B cell (primary cell): ENCODE measurements at regions of chr6 and their contacts with region 1.

Region 1: GRCh38 chr6:24581084-24581669 is 64.8 kb downstream of the KIAA0319 start:
- DNase-seq: peak; percentile 81
- ATAC-seq: peak; percentile 87
- H3K4me3 ChIP-seq: no peak overlapping the region
- H3K4me3 Mint-ChIP-seq: no peak overlapping the region
- H3K27ac ChIP-seq: no peak overlapping the region
- H3K27ac Mint-ChIP-seq: no peak overlapping the region
- H3K4me1 ChIP-seq: peaks cover 3 to 5% of the 10 kb centered on the region in 2 donors
- H3K4me1 Mint-ChIP-seq: peaks cover 4% of the 10 kb centered on the region
- H3K27me3 ChIP-seq: no peaks in the 10 kb centered on the region
- H3K27me3 Mint-ChIP-seq: no peaks in the 10 kb centered on the region
- CTCF ChIP-seq: peak; percentile 86

Region 2: DNA sequence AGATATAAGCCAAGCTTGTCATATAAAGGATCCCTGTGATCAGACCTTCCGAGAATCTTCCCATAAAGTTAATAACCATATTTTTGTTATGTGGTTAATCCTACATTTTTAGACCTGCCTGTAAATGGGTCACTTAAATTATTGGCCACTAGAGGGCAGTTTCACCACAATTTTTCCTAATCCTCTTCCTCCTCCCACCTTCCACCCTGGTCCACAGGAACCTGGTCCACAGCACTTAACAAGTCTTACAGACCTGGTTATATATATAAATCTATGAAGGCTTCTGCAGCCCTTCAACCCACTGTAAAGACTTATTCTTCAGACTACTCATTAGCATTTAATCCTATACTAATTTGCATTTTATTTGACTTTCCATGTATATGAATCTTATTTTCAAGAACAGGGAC is 150.1 kb before region 1 on chr6:
- CTCF ChIA-PET with region 1: interaction called, 8 read pairs
- POLR2A ChIA-PET with region 1: no interaction called
- intact Hi-C with region 1: loop called (anchors 2 kb)
- DNase-seq: peak; percentile 65
- ATAC-seq: peak; percentile 58
- H3K4me3 ChIP-seq: no peak overlapping the region
- H3K4me3 Mint-ChIP-seq: no peak overlapping the region
- H3K27ac ChIP-seq: no peak overlapping the region
- H3K27ac Mint-ChIP-seq: no peak overlapping the region
- H3K4me1 ChIP-seq: no peaks in the 10 kb centered on the region
- H3K4me1 Mint-ChIP-seq: no peaks in the 10 kb centered on the region
- H3K27me3 ChIP-seq: no peaks in the 10 kb centered on the region
- H3K27me3 Mint-ChIP-seq: no peaks in the 10 kb centered on the region
- CTCF ChIP-seq: peak; percentile 90

Region 3: GRCh38 chr6:24564090-24564489 is 17.1 kb before region 1 on chr6:
- CTCF ChIA-PET with region 1: interaction called, 21 read pairs
- POLR2A ChIA-PET with region 1: no interaction called
- intact Hi-C with region 1: no loop called
- DNase-seq: no peak
- ATAC-seq: no peak
- H3K4me3 ChIP-seq: no peak overlapping the region
- H3K4me3 Mint-ChIP-seq: no peak overlapping the region
- H3K27ac ChIP-seq: no peak overlapping the region
- H3K27ac Mint-ChIP-seq: no peak overlapping the region
- H3K4me1 ChIP-seq: no peaks in the 10 kb centered on the region
- H3K4me1 Mint-ChIP-seq: no peaks in the 10 kb centered on the region
- H3K27me3 ChIP-seq: no peaks in the 10 kb centered on the region
- H3K27me3 Mint-ChIP-seq: no peaks in the 10 kb centered on the region
- CTCF ChIP-seq: no peak

Region 4: DNA sequence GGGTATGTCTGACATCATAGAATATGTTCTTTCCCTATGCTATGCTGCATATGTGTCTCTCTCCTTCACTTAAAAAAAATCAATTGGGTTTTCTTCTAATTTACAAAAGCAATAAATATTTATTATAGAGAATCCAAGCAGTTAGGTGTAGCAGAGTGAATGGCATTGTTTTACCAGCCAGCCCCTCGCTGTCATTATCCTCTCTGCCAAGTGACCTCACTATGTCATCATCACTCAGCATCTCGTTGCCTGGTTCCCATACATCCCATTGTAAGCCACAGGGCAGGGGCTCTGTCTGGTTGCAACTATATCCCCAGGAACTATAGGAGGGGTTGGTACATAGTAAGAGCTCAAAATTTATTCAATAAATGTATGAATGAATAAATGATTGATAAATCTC is 33.5 kb after region 1 on chr6:
- CTCF ChIA-PET with region 1: no interaction called
- POLR2A ChIA-PET with region 1: no interaction called
- intact Hi-C with region 1: no loop called
- DNase-seq: no peak
- ATAC-seq: no peak
- H3K4me3 ChIP-seq: no peak overlapping the region
- H3K4me3 Mint-ChIP-seq: no peak overlapping the region
- H3K27ac ChIP-seq: no peak overlapping the region
- H3K27ac Mint-ChIP-seq: no peak overlapping the region
- H3K4me1 ChIP-seq: no peaks in the 10 kb centered on the region
- H3K4me1 Mint-ChIP-seq: no peaks in the 10 kb centered on the region
- H3K27me3 ChIP-seq: no peaks in the 10 kb centered on the region
- H3K27me3 Mint-ChIP-seq: peaks cover 4% of the 10 kb centered on the region
- CTCF ChIP-seq: no peak

Region 5: DNA sequence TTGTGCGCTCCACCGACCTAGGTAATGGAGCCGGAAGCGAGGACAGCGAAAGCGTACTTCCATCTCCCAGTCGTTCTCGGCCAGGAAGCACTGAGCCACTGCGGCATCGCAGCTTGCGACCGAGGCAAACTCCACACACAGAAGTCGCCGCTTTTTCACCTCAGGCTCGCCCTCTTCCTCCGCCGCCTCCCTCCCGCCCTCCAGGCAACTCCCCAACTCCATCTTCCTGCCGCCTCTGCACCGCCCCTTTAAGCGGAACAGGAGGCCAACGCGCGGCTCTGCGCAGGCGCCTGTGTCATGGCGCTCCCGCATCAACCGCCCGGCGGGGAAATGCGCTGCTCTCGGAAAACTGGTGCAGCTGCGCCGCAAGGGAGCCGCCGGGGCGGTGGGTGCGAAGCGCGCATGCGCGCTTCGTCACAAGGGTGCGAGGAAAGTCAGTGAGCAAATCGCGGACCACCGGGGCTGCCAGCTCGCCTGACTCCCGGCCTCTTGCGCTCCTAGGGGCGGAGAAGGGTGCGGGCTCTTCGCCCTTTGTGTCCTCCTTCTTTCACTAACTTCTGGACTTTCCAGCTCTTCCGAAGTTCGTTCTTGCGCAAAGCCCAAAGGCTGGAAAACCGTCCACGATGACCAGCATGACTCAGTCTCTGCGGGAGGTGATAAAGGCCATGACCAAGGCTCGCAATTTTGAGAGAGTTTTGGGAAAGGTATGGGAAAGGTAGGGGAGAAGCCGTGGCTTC is 85.6 kb after region 1 on chr6 and contains the starts of genes ACOT13 and TDP2:
- CTCF ChIA-PET with region 1: interaction called, 28 read pairs
- POLR2A ChIA-PET with region 1: no interaction called
- intact Hi-C with region 1: loop called (anchors 1 kb)
- DNase-seq: peak; percentile 98
- ATAC-seq: peak; percentile 94
- H3K4me3 ChIP-seq: peak within 1 kb of the TSS; percentile 74 to 100 (median 96)
- H3K4me3 Mint-ChIP-seq: peak within 1 kb of the TSS; percentile 99
- H3K27ac ChIP-seq: peak within 1 kb of the TSS; percentile 75 to 82
- H3K27ac Mint-ChIP-seq: peak within 1 kb of the TSS; percentile 98
- H3K4me1 ChIP-seq: peaks cover 22 to 23% of the 10 kb centered on the region in 2 donors
- H3K4me1 Mint-ChIP-seq: peaks cover 46% of the 10 kb centered on the region
- H3K27me3 ChIP-seq: no peaks in the 10 kb centered on the region
- H3K27me3 Mint-ChIP-seq: no peaks in the 10 kb centered on the region
- CTCF ChIP-seq: peak; percentile 67
- total RNA-seq, gene ACOT13: 5.7 and 6.6 TPM in 2 replicates
- total RNA-seq, gene TDP2: 63.5 and 68.1 TPM in 2 replicates

Region 6: GRCh38 chr6:24709014-24709711 is 128.0 kb after region 1 on chr6:
- CTCF ChIA-PET with region 1: interaction called, 10 read pairs
- POLR2A ChIA-PET with region 1: no interaction called
- intact Hi-C with region 1: no loop called
- DNase-seq: no peak
- ATAC-seq: no peak
- H3K4me3 ChIP-seq: no peak overlapping the region
- H3K4me3 Mint-ChIP-seq: no peak overlapping the region
- H3K27ac ChIP-seq: peak overlapping the region in 1 of 2 donors; percentile 34
- H3K27ac Mint-ChIP-seq: peak overlapping the region; percentile 67
- H3K4me1 ChIP-seq: peaks cover 0 to 9% of the 10 kb centered on the region in 2 donors
- H3K4me1 Mint-ChIP-seq: peaks cover 42% of the 10 kb centered on the region
- H3K27me3 ChIP-seq: no peaks in the 10 kb centered on the region
- H3K27me3 Mint-ChIP-seq: no peaks in the 10 kb centered on the region
- CTCF ChIP-seq: no peak

Region 7: DNA sequence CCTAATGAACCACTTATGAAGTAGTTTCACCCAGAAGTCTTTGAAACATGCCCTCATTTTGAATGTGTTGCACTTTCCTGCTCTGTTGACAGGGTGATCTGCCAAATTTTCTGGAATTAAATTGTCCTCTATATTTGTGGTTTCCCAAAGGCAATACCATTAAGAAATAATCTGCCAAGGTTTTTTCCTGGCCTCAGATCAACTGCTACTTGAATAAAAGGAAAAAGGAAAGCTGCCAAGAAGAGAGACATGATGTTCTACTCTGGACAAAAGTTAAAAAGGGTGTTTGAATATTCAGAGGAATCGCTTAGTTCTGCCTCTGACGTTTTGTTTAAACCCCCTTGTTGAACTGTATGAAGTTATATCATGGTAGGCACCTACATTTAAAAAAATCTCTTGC is 254.9 kb after region 1 on chr6:
- CTCF ChIA-PET with region 1: no interaction called
- POLR2A ChIA-PET with region 1: no interaction called
- intact Hi-C with region 1: no loop called
- DNase-seq: no peak
- ATAC-seq: no peak
- H3K4me3 ChIP-seq: no peak overlapping the region
- H3K4me3 Mint-ChIP-seq: no peak overlapping the region
- H3K27ac ChIP-seq: peak overlapping the region in 1 of 2 donors; percentile 47
- H3K27ac Mint-ChIP-seq: peak overlapping the region; percentile 78
- H3K4me1 ChIP-seq: peaks cover 0 to 5% of the 10 kb centered on the region in 2 donors
- H3K4me1 Mint-ChIP-seq: peaks cover 14% of the 10 kb centered on the region
- H3K27me3 ChIP-seq: no peaks in the 10 kb centered on the region
- H3K27me3 Mint-ChIP-seq: no peaks in the 10 kb centered on the region
- CTCF ChIP-seq: no peak

Region 8: GRCh38 chr6:24855395-24856245 is 274.4 kb after region 1 on chr6:
- CTCF ChIA-PET with region 1: interaction called, 10 read pairs
- POLR2A ChIA-PET with region 1: no interaction called
- intact Hi-C with region 1: no loop called
- DNase-seq: peak; percentile 86
- ATAC-seq: peak; percentile 42
- H3K4me3 ChIP-seq: no peak overlapping the region
- H3K4me3 Mint-ChIP-seq: peak overlapping the region; percentile 46
- H3K27ac ChIP-seq: peak overlapping the region; percentile 60 to 80
- H3K27ac Mint-ChIP-seq: peak overlapping the region; percentile 97
- H3K4me1 ChIP-seq: peaks cover 62% of the 10 kb centered on the region in 2 donors
- H3K4me1 Mint-ChIP-seq: peaks cover 60% of the 10 kb centered on the region
- H3K27me3 ChIP-seq: no peaks in the 10 kb centered on the region
- H3K27me3 Mint-ChIP-seq: no peaks in the 10 kb centered on the region
- CTCF ChIP-seq: peak; percentile 86